GM12878 (cell line): ENCODE measurements at regions of chr6 and their contacts with region 1.

Region 1: DNA sequence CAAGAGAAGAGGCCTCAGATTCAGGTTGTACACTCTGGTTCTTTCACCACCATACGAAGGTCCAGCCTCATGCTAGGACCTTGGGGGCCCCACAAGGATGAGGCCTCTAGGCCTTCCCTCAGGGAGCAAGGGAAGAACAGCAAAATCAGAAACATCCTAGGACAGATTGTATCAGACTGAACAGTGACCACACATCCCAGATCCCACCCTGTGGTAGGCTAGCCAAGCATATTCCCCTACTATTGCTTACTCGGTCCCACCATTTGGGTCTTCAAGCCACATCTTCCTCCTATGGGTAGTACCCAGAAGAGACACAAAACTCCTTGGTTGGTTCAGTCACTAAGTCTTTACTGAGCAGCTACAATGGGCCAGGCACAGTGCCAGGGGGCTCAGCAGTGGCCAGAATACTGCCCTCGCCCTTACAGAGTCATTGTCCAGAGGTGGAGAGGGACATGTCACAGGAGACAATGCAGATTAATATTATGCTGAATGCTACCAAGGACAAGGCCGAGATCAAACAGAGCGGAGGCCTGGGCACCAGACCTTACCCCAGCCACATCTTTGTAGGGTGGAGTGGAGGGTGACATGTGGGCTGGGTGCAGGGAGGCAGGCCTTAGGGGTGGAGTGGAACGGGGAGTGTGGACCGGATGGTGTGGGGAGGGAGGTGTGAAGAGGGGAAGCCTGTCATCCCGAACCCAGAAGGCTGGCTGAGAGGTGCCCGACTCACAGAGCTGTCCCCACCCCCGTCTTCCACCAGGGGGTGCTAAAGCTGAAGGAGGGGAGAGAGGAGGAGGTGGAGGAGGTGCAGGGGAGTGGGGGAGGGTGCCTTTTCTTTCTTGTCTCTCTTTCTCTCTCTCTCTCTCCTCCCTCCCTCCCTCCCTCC is 6.8 kb upstream of the MAPK13 start:
- DNase-seq: no peak
- ATAC-seq: peak; percentile 92
- H3K4me3 ChIP-seq: no peak overlapping the region
- H3K27ac ChIP-seq: no peak overlapping the region
- H3K4me1 ChIP-seq: peaks cover 26% of the 10 kb centered on the region
- H3K27me3 ChIP-seq: no peaks in the 10 kb centered on the region
- CTCF ChIP-seq: peak; percentile 75 to 93 (median 91)
- EP300 ChIP-seq: 0 out of 4 replicates have a peak, but pooled peaks of 1 of the 2 experiments have one; percentile 26
- POLR2A ChIP-seq: no peak
- RAD21 ChIP-seq: peak; percentile 92

Region 2: DNA sequence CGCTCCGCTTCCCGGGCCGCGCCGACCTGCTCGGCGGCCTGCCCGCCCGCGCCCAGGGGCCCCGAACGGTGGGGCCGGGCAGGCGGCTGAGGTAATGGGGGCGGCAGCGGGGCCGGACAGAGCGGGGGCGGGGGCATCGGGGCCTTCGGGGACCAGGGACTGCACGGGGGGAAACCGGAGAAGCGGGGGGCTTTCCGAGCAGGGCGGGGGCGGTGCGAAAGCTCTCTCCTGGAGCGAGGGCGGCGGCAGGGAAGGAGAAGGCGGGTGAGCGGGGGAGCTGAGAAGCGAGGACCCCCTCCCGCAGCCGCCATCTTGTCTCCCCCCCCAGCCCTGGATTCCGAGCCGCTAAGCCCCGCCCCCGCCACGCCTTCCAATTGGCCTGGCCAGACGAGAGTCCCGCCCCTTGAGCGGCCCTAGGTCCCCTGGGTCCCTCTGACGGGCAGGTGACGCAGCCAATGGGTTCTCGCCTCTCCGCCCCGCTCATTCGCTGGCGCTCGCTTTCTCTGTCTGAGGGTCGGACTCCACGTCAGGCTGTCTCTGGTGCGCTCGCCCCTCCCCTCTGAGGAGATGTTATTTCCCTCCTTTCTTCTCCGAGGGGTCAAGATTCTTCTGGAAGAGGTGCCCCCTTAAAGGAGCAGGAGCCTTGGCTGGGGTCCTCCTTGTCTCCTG is 73.5 kb after region 1 on chr6:
- CTCF ChIA-PET with region 1: interaction called, 12 read pairs
- POLR2A ChIA-PET with region 1: interaction called, 7 read pairs
- RAD21 ChIA-PET with region 1: interaction called, 12 read pairs
- SMC1A ChIA-PET with region 1: interaction called, 27 read pairs
- in situ Hi-C with region 1: no loop called
- intact Hi-C with region 1: loop called (anchors 2 kb)
- DNase-seq: peak; percentile 88
- ATAC-seq: peak; percentile 97
- H3K4me3 ChIP-seq: peak overlapping the region; percentile 79
- H3K27ac ChIP-seq: peak overlapping the region; percentile 64
- H3K4me1 ChIP-seq: peaks cover 5% of the 10 kb centered on the region; the same call in 1 of the 2 replicates
- H3K27me3 ChIP-seq: no peaks in the 10 kb centered on the region
- CTCF ChIP-seq: no peak
- EP300 ChIP-seq: no peak
- POLR2A ChIP-seq: peak; percentile 79
- RAD21 ChIP-seq: no peak